ENCODE measurements at regions of chr17 and their contacts with region 1.

Region 1: GRCh38 chr17:55303701-55304145 is 39.0 kb downstream of the HLF start:
- DNase-seq: peak in 1 of 4 experiments; percentile 38
- ATAC-seq: peak; percentile 51
- H3K4me3 ChIP-seq: no peak overlapping the region
- H3K27ac ChIP-seq: no peak overlapping the region
- H3K4me1 ChIP-seq: peaks cover 6 to 13% of the 10 kb centered on the region in 2 experiments; a peak in 4 of 5 replicates
- H3K27me3 ChIP-seq: no peaks in the 10 kb centered on the region; a peak in 1 of 5 replicates
- CTCF ChIP-seq: peak in 2 of 3 experiments; percentile 33 to 51; a peak in 2 of 6 replicates
- EP300 ChIP-seq: 0 out of 2 replicates have a peak, but pooled peaks have one; percentile 7
- POLR2A ChIP-seq: no peak
- RAD21 ChIP-seq: peak; percentile 51 to 55

Region 2: GRCh38 chr17:55348749-55349354 is 45.1 kb after region 1 on chr17:
- CTCF ChIA-PET with region 1: no interaction called
- POLR2A ChIA-PET with region 1: no interaction called
- in situ Hi-C with region 1: no loop called
- intact Hi-C with region 1: loop called (anchors 1 kb)
- DNase-seq: peak; percentile 43 to 78 (median 55)
- ATAC-seq: peak; percentile 64
- H3K4me3 ChIP-seq: no peak overlapping the region
- H3K27ac ChIP-seq: no peak overlapping the region
- H3K4me1 ChIP-seq: peaks cover 10 to 25% of the 10 kb centered on the region in 2 experiments
- H3K27me3 ChIP-seq: no peaks in the 10 kb centered on the region
- CTCF ChIP-seq: peak; percentile 81 to 92 (median 83)
- EP300 ChIP-seq: no peak
- POLR2A ChIP-seq: no peak
- RAD21 ChIP-seq: peak; percentile 92 to 93

Region 3: DNA sequence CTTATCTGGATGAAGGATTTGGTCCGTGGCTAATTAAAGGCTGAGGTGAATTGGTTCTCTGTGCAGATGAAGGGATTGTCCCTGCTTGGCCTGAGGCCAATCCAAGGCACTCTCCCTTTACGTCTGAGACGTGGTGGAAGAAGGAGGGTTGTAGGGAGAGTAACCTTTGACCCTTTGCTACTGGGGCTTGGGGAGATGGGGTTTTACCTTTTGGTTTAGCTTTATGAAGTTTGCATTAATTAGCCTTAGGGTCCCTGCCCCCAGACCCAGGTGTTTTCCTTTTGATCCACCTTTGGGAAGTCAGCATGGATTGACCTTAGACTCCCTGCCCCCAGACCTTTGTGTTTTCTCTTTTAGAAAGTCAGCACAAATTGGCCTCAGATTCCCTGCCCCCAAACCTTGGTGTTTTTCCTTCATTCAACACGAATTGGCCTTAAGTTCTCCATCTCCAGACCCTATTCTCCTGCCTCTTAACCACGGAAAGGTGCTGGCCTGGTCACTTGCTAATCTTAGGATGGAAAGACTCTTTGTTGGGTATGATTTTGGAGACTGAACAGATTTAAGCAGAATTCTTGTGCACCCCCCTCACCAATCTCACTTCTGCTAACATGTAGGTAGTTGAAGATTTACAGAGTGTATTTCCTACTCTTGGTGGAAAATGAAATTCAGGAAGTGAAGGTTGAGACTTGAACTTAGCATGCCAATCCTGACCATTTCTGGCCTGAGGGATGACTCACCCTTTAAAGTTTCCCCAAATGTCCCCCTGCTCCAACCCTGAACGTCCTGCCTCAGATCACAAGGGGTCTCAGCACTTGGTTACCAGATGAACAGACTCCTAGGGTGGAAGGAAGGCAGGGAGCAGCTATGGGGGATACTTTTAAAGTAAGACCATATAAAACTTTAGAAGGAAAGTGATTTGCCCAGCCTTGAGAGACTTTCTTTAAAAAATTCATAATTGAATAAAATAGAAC is 141.0 kb after region 1 on chr17:
- CTCF ChIA-PET with region 1: no interaction called
- POLR2A ChIA-PET with region 1: no interaction called
- in situ Hi-C with region 1: no loop called
- intact Hi-C with region 1: no loop called
- DNase-seq: no peak
- ATAC-seq: no peak; the same call in 2 of the 3 replicates
- H3K4me3 ChIP-seq: no peak overlapping the region
- H3K27ac ChIP-seq: no peak overlapping the region
- H3K4me1 ChIP-seq: peaks cover 0 to 23% of the 10 kb centered on the region in 2 experiments; a peak in 3 of 5 replicates
- H3K27me3 ChIP-seq: no peaks in the 10 kb centered on the region
- CTCF ChIP-seq: no peak
- EP300 ChIP-seq: no peak
- POLR2A ChIP-seq: no peak
- RAD21 ChIP-seq: no peak

Region 4: DNA sequence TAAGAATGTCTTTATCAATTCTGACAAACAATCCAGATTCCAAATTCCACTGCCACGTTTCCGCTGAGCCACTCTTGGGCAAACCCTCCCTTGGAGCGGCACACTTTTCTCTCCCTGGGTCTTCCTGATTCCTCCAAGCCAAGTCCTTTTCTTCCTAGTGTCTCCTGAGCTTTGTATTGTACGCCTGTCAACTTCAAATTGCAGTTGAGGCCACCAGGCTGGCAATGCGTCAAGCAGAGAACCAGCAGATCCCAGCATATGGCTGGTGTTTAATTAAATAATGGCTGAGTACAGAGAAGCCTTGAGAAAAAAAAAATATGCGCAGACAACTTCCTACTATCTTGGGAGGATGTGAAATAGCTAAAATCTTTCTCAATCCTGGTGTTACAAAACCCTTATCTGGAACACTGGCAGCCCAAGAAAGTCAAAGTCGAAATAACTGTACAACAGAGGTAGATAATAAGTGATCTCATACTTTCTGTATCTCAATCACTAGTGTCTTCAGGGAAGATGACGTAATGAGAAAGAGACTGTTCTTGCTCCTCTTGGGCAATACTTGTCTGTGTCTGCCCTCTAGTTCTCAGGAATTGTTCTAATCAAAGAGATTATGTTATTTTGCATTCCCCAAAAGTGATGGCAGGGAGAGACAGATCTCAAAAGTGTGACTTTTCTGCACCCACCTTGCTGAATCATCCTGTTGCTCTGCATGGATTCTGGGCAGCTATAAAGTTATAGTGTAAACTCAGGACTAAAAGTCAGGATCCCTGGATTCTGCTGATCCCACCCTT is 192.6 kb after region 1 on chr17:
- CTCF ChIA-PET with region 1: no interaction called
- POLR2A ChIA-PET with region 1: no interaction called
- in situ Hi-C with region 1: no loop called
- intact Hi-C with region 1: loop called (anchors 1 kb)
- DNase-seq: peak in 2 of 4 experiments; percentile 23 to 48
- ATAC-seq: peak; percentile 82
- H3K4me3 ChIP-seq: no peak overlapping the region
- H3K27ac ChIP-seq: peak overlapping the region; percentile 8; the same call in 1 of the 3 replicates
- H3K4me1 ChIP-seq: peaks cover 0 to 4% of the 10 kb centered on the region in 2 experiments; a peak in 1 of 5 replicates
- H3K27me3 ChIP-seq: no peaks in the 10 kb centered on the region; a peak in 1 of 5 replicates
- CTCF ChIP-seq: peak in 1 of 3 experiments; percentile 46; a peak in 2 of 6 replicates
- EP300 ChIP-seq: peak; percentile 51; the same call in 1 of the 2 replicates
- POLR2A ChIP-seq: no peak
- RAD21 ChIP-seq: peak; percentile 53 to 70

Region 5: GRCh38 chr17:55513885-55514591 is 210.3 kb after region 1 on chr17:
- CTCF ChIA-PET with region 1: no interaction called
- POLR2A ChIA-PET with region 1: no interaction called
- in situ Hi-C with region 1: no loop called
- intact Hi-C with region 1: loop called (anchors 5 kb)
- DNase-seq: peak; percentile 48 to 81 (median 58)
- ATAC-seq: peak; percentile 83
- H3K4me3 ChIP-seq: no peak overlapping the region
- H3K27ac ChIP-seq: no peak overlapping the region
- H3K4me1 ChIP-seq: no peaks in the 10 kb centered on the region; a peak in 2 of 5 replicates
- H3K27me3 ChIP-seq: peaks cover under 1 to 3% of the 10 kb centered on the region in 2 experiments; a peak in 3 of 5 replicates
- CTCF ChIP-seq: peak; percentile 77 to 92 (median 77)
- EP300 ChIP-seq: no peak
- POLR2A ChIP-seq: no peak
- RAD21 ChIP-seq: peak; percentile 86 to 94